Activated CD4-positive, alpha-beta T cell treated with anti-CD3 and anti-CD28 coated beads, Interleukin-2, amount 10 ng/mL, durations not matched to agents 24 days and 14 days (primary cell): ENCODE measurements at regions of chr14 and their contacts with region 1.

Region 1: DNA sequence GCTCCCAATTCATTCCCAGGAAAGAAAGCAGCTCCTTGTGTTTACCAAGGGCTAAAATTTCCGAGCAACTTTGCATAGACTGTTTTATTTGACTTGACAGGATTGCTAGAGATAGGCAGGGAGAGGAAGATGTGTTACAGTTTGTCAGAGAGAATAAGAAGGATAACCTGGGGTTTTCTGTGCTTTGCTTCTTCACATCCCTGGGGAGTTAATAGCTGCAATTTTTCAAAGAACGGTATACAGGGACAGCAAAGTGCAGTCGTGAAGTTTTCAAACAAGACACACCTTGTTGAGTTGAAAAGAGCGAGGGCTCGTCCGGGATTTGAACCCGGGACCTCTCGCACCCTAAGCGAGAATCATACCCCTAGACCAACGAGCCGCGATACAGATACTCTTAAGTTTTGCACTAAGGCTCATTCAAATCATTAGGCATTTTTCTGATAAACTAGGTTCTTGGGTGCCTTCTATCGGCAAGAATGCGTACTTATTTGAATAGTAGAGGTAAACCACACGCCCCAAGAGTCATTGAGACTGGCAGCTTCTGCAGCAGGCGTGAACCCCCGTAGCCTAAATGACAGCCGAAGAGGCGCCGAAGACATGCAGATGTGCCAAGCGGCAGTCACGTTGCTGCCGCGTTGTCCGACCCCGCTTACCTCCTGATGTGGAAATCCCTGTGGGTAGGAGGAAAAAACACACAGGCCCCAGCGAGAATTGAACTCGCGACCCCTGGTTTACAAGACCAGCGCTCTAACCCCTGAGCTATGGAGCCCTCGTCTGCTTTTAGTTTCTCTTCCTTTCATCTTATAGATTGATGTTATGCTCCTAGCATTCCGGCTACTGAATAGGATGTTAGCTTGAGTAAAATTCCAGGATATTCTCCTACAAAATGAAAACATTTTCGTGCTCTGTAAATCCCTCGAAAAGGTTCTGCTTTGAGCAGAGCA is 22.2 kb upstream of the RNASE12 start:
- DNase-seq: peak; percentile 94
- H3K4me3 Mint-ChIP-seq: no peak overlapping the region
- H3K27ac Mint-ChIP-seq: no peak overlapping the region
- H3K4me1 Mint-ChIP-seq: peaks cover 14% of the 10 kb centered on the region
- H3K27me3 Mint-ChIP-seq: peaks cover 1% of the 10 kb centered on the region

Region 2: DNA sequence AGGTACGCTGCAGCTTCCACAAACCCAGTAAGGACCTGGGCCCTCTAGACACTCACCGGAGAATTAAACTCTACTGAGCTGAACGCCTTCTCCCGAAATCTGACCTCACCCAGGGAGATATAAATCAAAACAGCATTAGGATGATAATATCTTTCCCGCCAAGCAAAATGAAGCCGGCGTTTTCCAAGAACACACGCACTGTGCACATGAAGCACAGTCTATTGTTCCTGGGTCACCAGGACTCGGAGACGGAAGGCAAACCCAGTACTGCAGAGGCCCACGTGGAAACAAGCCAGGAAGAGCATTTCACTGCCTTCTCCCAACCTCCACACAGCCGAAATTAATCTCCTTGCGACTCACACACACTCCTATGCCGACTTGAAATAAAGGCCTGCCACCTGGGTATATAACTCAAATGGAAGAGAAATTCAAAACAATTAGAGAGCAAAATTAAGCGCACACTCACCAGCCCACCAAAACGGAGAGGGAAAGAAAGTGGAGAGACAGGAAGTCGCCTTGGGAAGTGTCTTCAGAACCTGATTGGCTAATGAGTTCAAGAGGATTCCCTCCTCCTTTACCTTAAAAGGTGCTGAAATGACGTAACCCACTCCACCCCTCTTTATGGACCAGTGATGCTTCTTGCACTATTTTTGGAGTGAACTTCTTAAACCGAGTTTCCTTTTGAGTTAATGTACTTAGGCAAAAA is 280.4 kb before region 1 on chr14 and contains the start of gene CCNB1IP1:
- intact Hi-C with region 1: loop called (anchors 1 kb)
- DNase-seq: peak; percentile 89
- H3K4me3 Mint-ChIP-seq: peak within 1 kb of the TSS; percentile 99
- H3K27ac Mint-ChIP-seq: peak within 1 kb of the TSS; percentile 94
- H3K4me1 Mint-ChIP-seq: peaks cover 38% of the 10 kb centered on the region
- H3K27me3 Mint-ChIP-seq: peaks cover 5% of the 10 kb centered on the region
- total RNA-seq, gene CCNB1IP1: 60.5 and 61.8 TPM in 2 replicates

Region 3: GRCh38 chr14:20454516-20455354 is 158.6 kb before region 1 on chr14 and contains the starts of genes APEX1 and OSGEP:
- intact Hi-C with region 1: loop called (anchors 1 kb)
- DNase-seq: peak; percentile 99
- H3K4me3 Mint-ChIP-seq: peak within 1 kb of the TSS; percentile 59
- H3K27ac Mint-ChIP-seq: no peak within 1 kb of the TSS
- H3K4me1 Mint-ChIP-seq: peaks cover 20% of the 10 kb centered on the region
- H3K27me3 Mint-ChIP-seq: no peaks in the 10 kb centered on the region
- total RNA-seq, gene APEX1: 239 and 242 TPM in 2 replicates
- total RNA-seq, gene OSGEP: 69.8 and 76.9 TPM in 2 replicates

Region 4: DNA sequence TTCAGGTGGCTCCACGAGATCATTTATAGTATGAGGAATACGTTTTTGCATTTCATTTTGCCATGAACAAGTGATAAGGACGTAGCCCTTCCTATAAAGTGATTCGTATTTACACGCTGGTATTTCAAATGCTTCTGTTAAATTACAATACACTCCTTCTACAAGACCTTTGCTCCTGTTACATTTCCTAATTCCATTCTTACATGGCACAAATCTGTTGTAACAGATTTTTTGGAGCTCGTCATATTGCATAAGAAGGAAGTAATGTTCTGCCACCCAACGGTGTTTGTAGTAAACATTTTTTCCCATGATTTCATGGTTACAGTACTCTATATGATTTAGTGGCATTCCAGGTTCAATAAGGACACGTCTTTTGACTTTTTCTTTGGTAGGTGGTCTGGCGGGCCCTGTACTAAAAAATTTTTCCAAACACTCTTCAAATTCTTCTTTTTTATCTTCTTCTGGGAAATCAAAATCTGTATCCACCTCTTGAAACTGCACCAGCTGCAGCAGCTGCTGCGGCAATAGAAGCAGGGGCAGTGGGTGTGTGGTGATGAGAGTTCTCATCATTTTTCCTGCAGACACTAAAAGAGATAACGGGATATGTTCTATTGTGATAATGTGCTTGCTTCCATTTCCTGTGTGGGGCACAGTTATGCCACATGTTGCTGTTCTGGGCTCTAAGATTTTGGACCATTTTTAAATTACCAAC is 56.7 kb before region 1 on chr14:
- intact Hi-C with region 1: no loop called
- DNase-seq: peak; percentile 17
- H3K4me3 Mint-ChIP-seq: no peak overlapping the region
- H3K27ac Mint-ChIP-seq: no peak overlapping the region
- H3K4me1 Mint-ChIP-seq: no peaks in the 10 kb centered on the region
- H3K27me3 Mint-ChIP-seq: peaks cover 7% of the 10 kb centered on the region

Region 5: DNA sequence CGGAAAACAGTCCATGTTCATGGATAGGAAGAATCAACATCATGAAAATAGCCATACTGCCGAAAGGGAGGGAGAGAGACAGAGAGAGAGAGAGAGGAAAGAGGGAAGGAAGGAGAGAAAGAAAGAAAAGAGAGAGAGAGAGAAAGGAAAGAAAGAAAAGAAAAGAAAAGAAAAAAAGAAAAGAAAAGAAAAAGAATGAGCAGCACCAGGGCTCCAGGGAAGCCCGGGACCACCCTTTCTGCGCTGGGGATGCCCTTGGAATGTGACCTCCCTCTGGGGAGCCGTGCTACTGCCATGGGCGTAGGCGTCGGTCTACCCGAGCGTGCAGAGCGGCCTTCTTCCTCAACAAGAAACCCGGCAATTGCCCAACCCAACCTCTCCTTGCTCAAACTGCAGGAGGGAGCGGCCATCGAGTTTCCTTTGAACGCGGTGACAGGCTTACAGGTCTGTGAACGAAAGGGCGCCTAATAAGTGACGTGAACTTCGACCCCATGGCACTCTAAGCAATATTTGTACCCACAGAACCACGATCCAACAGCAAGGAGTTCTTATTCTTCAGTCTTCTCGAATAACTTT is 11.2 kb after region 1 on chr14:
- intact Hi-C with region 1: loop called (anchors 1 kb)
- DNase-seq: peak; percentile 81
- H3K4me3 Mint-ChIP-seq: peak overlapping the region; percentile 80
- H3K27ac Mint-ChIP-seq: peak overlapping the region; percentile 83
- H3K4me1 Mint-ChIP-seq: peaks cover 48% of the 10 kb centered on the region
- H3K27me3 Mint-ChIP-seq: peaks cover 56% of the 10 kb centered on the region

Region 6: DNA sequence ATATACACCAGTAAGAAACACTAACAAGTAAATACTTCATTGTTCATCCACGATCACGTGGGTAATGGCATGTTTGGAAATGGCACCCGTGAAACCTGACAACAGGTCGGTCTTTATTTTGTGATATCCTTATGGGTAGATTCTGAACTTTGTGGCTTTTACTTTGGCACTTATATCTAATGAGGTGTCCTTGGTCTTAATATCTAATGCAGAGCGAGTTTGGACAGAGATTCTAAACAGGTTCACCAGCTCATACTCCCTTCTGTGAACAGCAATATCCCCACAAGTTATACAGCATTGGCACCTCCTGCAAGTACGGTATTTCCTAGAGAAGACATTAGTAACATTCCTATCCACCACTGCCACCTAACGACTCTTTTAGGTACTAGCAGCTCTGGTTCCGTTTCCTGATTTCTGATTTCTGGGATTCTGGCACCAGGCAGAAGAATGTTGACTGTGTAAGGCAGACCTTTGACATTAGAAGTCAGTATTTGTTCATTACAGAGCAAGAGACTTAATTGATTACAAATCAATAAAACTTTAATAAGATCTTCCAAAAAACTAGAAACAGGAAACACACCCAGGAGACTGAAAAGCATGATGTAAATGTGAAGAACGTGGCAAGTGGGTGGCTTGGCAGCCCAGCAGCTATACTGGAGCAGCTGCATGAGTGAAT is 77.6 kb after region 1 on chr14:
- intact Hi-C with region 1: loop called (anchors 1 kb)
- DNase-seq: peak; percentile 84
- H3K4me3 Mint-ChIP-seq: no peak overlapping the region
- H3K27ac Mint-ChIP-seq: no peak overlapping the region
- H3K4me1 Mint-ChIP-seq: peaks cover 11% of the 10 kb centered on the region
- H3K27me3 Mint-ChIP-seq: peaks cover 2% of the 10 kb centered on the region

Region 7: DNA sequence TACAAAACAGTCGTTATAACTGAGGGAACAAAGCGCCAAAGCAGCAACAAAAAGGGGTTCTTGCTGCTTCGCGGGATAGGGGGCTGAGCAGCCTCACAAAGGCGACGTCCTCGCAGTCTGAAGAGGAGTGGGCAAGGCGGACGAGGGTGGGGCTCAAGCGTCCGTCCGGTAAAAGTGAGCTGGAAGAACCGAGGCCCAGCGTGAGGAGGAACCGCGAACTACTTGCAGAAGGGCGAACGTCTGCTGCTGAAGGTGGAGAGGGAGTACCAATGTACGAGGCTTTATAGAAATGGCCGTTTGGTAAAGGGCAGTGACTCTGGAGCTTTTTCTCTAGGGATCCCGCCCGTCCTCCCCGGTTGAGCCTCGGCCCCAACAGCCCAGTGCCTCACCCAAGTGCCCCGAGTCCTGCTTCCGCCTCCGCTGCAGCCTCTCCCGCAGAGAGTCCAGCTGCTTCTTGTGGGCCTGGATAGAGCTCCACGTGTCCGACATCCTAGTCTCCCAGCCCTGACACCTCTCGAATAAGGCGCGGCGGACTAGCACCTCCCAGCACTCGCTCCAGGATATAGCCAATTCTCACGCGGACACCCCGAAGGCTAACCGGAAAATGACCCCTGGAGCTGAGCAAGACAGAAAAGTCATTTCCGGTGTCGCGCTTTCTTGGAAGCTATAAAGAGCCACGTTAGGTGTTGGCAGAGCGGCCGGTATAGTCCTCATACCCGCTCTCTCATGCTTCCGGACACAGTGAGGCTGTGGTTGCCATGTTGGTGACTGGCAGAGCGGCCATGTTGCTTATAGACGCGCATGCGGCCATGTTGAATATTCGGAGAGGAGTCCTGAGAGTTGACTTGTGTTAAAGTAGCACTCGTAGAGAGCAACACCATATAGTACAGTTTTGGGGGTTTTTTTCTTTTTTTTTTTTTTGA is 897.6 kb after region 1 on chr14 and contains the start of gene METTL3:
- intact Hi-C with region 1: loop called (anchors 5 kb)
- DNase-seq: peak; percentile 98
- H3K4me3 Mint-ChIP-seq: peak within 1 kb of the TSS; percentile 99
- H3K27ac Mint-ChIP-seq: peak within 1 kb of the TSS; percentile 98
- H3K4me1 Mint-ChIP-seq: peaks cover 28% of the 10 kb centered on the region
- H3K27me3 Mint-ChIP-seq: peaks cover 4% of the 10 kb centered on the region
- total RNA-seq, gene METTL3: 72.9 and 81.7 TPM in 2 replicates